ENCODE measurements at regions of chr12 and their contacts with region 1.

Region 1: GRCh38 chr12:4591180-4591687 is 29.2 kb downstream of the DYRK4 start:
- DNase-seq: no peak
- ATAC-seq: 0 out of 6 replicates have a peak, but pooled peaks of 1 of the 2 experiments have one; percentile 22
- H3K4me3 ChIP-seq: no peak overlapping the region
- H3K27ac ChIP-seq: no peak overlapping the region
- H3K4me1 ChIP-seq: no peaks in the 10 kb centered on the region
- CTCF ChIP-seq: no peak
- EP300 ChIP-seq: no peak
- POLR2A ChIP-seq: no peak
- RAD21 ChIP-seq: no peak

Region 2: GRCh38 chr12:4439736-4440135 is 151.5 kb before region 1 on chr12:
- CTCF ChIA-PET with region 1: no interaction called
- POLR2A ChIA-PET with region 1: no interaction called
- DNase-seq: no peak
- ATAC-seq: no peak
- H3K4me3 ChIP-seq: no peak overlapping the region
- H3K27ac ChIP-seq: no peak overlapping the region
- H3K4me1 ChIP-seq: no peaks in the 10 kb centered on the region
- CTCF ChIP-seq: no peak
- EP300 ChIP-seq: no peak
- POLR2A ChIP-seq: no peak
- RAD21 ChIP-seq: no peak

Region 3: GRCh38 chr12:4449851-4450221 is 141.4 kb before region 1 on chr12:
- CTCF ChIA-PET with region 1: no interaction called
- POLR2A ChIA-PET with region 1: no interaction called
- DNase-seq: no peak
- ATAC-seq: no peak
- H3K4me3 ChIP-seq: no peak overlapping the region
- H3K27ac ChIP-seq: no peak overlapping the region
- H3K4me1 ChIP-seq: no peaks in the 10 kb centered on the region
- CTCF ChIP-seq: no peak
- EP300 ChIP-seq: no peak
- POLR2A ChIP-seq: no peak
- RAD21 ChIP-seq: no peak

Region 4: DNA sequence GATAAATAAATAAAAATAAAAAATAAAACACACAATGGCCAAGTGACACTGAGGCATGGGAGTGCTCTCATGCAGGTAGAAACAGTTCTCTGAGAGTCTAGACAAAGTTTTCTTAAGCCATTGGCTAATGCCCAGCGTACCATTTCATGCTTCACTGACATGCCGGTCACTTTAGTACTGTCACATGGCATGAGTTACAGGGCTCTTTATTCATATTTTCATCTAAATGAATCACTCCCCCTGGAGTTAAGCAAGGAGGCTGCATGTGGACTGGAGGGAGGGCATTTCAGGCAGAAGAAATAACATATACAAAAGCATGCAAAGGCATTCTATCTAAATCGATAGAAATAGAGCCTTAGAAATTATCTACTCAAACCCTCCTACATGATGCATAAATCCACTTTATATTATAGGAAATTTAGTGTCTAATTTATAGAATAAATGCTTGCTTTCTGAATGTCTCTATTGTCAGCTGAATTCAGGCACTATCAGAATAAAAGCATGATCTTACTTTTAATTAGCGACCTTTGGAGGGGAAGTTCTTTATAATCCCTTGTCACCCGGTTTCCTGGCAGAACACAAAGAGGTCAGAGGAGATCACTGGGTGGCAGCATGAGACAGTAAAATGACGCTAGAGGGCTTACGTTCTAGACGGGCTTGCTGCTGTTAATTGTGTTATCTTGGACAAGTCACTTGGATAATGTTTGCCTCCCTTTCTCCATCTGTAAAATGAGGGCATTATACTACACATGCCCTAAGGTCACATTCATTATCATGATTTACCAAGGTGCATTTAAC is 11.7 kb before region 1 on chr12:
- CTCF ChIA-PET with region 1: interaction called, 14 read pairs
- POLR2A ChIA-PET with region 1: no interaction called
- DNase-seq: peak; percentile 8 to 35
- ATAC-seq: peak; percentile 66 to 74; a peak in 4 of 6 replicates
- H3K4me3 ChIP-seq: no peak overlapping the region
- H3K27ac ChIP-seq: no peak overlapping the region
- H3K4me1 ChIP-seq: no peaks in the 10 kb centered on the region
- CTCF ChIP-seq: peak; percentile 30; the same call in 2 of the 3 replicates
- EP300 ChIP-seq: no peak
- POLR2A ChIP-seq: no peak
- RAD21 ChIP-seq: peak; percentile 47 to 59; a peak in 4 of 5 replicates

Region 5: DNA sequence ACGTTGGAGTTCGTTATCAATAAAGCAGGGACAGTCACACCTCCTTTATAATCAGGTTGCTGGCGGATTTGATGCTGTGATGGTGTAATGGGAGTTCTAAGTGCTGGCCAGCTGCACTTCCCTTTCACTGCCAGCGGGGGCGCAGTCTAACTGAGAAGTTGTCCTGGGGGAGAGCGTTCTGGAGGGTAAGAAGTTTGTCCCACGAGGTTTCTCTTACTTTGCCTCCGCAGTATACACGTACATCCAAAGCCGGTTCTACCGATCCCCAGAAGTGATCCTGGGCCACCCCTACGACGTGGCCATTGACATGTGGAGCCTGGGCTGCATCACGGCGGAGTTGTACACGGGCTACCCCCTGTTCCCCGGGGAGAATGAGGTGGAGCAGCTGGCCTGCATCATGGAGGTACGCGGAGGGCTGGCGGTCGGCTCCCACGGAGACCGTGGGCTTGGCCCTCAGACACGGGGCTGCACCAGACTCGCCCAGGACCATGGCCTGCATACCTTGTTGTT is 13.5 kb after region 1 on chr12:
- CTCF ChIA-PET with region 1: interaction called, 62 read pairs
- POLR2A ChIA-PET with region 1: no interaction called
- DNase-seq: peak; percentile 80 to 93
- ATAC-seq: peak; percentile 96 to 98
- H3K4me3 ChIP-seq: peak overlapping the region; percentile 83
- H3K27ac ChIP-seq: peak overlapping the region; percentile 81 to 89
- H3K4me1 ChIP-seq: peaks cover 5% of the 10 kb centered on the region; the same call in 1 of the 3 replicates
- CTCF ChIP-seq: peak; percentile 71
- EP300 ChIP-seq: no peak
- POLR2A ChIP-seq: peak; percentile 67
- RAD21 ChIP-seq: peak; percentile 45 to 62; a peak in 4 of 5 replicates

Region 6: GRCh38 chr12:4648501-4649357 is 57.5 kb after region 1 on chr12 and contains the starts of genes AKAP3 and NDUFA9:
- CTCF ChIA-PET with region 1: no interaction called
- POLR2A ChIA-PET with region 1: no interaction called
- DNase-seq: peak; percentile 67 to 87
- ATAC-seq: peak; percentile 98 to 99
- H3K4me3 ChIP-seq: peak within 1 kb of the TSS; percentile 75
- H3K27ac ChIP-seq: peak within 1 kb of the TSS; percentile 84 to 86
- H3K4me1 ChIP-seq: peaks cover 13% of the 10 kb centered on the region; the same call in 2 of the 3 replicates
- CTCF ChIP-seq: no peak
- EP300 ChIP-seq: no peak
- POLR2A ChIP-seq: peak; percentile 88
- RAD21 ChIP-seq: no peak
- polyA plus RNA-seq, gene AKAP3: 0.59 and 0.75 TPM in 2 replicates
- polyA plus RNA-seq, gene NDUFA9: 81.4 and 125 TPM in 2 replicates

Region 7: DNA sequence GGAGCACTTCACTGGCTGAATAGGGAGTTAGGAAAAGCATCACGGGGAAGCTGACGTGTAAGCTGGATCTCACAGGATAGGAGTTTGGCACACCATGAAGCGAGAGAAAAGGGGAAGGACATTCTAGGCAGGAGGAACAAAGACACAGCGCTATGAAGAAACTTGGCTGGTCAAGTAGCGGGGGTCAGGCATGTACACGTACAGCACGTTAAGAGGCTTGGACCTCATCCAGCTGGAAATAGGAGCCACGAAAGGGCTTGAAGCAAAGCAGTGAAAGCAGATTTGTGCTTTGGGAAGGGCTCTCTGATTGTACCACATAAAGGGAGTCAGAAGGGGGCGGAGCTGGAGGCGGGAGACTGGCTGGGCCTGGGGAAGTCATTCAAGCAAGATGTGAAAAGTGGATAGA is 109.4 kb after region 1 on chr12:
- CTCF ChIA-PET with region 1: no interaction called
- POLR2A ChIA-PET with region 1: no interaction called
- DNase-seq: no peak
- ATAC-seq: no peak
- H3K4me3 ChIP-seq: no peak overlapping the region
- H3K27ac ChIP-seq: no peak overlapping the region
- H3K4me1 ChIP-seq: no peaks in the 10 kb centered on the region
- CTCF ChIP-seq: no peak
- EP300 ChIP-seq: no peak
- POLR2A ChIP-seq: no peak
- RAD21 ChIP-seq: no peak

Measured in A549 (cell line).